ENCODE measurements at regions of chr4 and their contacts with region 1.

Region 1: GRCh38 chr4:56387023-56388001 is at the start of gene AASDH:
- DNase-seq: peak; percentile 92
- H3K4me3 ChIP-seq: peak within 1 kb of the TSS; percentile 84 to 91 (median 91)
- H3K27ac ChIP-seq: peak within 1 kb of the TSS; percentile 96
- H3K4me1 ChIP-seq: peaks cover 13% of the 10 kb centered on the region
- H3K27me3 ChIP-seq: no peaks in the 10 kb centered on the region
- CTCF ChIP-seq: no peak
- total RNA-seq, gene AASDH: 11.4 to 18.2 TPM

Region 2: DNA sequence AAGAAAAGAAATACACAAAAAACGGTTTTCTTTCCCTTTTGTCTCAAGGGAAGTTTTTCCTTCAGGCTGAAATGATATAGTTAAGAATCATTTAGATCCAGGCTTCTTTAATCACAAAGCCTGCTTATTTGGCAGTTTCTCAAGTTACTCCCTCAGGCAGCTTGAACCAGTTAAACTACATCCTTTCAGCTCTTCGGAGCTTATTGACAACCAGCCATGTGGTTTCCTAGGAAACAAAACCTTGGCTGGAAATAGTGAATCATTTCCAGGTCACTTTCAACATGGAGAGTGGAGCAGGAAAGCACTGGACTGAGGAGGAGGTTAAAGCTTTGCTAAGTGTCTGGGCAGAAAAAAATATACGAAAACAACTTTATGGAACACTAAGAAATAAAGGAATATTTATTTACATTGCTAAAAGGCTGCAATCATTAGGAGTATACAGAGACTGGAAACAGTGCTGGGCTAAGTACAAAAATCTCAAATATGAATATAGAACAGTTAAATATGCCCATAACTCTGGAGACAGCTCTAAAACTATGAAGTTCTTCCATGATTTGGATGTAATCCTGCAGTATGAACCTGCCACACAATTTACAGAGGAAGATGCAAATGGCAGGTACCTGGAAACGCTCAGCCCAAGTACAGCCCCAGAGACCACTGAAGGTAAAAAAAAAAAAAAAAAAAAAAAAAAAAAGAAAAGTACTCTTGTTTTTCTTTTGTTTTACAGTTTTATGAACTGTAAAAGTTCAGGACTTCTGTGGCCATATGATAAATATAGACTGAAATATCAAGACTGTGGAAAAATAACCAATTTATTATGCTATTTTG is 23.1 kb after region 1 on chr4:
- CTCF ChIA-PET with region 1: no interaction called
- dilution Hi-C with region 1: no loop called
- in situ Hi-C with region 1: no loop called
- intact Hi-C with region 1: loop called (anchors 1 kb)
- DNase-seq: peak; percentile 96
- H3K4me3 ChIP-seq: peak overlapping the region; percentile 22 to 32 (median 32)
- H3K27ac ChIP-seq: peak overlapping the region; percentile 96
- H3K4me1 ChIP-seq: peaks cover 13% of the 10 kb centered on the region
- H3K27me3 ChIP-seq: no peaks in the 10 kb centered on the region
- CTCF ChIP-seq: no peak

Region 3: GRCh38 chr4:56435306-56435926 is 48.1 kb after region 1 on chr4 and contains the start of gene PPAT:
- CTCF ChIA-PET with region 1: no interaction called
- dilution Hi-C with region 1: no loop called
- in situ Hi-C with region 1: no loop called
- intact Hi-C with region 1: loop called (anchors 1 kb)
- DNase-seq: peak; percentile 99
- H3K4me3 ChIP-seq: peak within 1 kb of the TSS; percentile 85 to 89 (median 88)
- H3K27ac ChIP-seq: peak within 1 kb of the TSS; percentile 95
- H3K4me1 ChIP-seq: peaks cover 9% of the 10 kb centered on the region
- H3K27me3 ChIP-seq: no peaks in the 10 kb centered on the region
- CTCF ChIP-seq: no peak
- total RNA-seq, gene PPAT: 20.0 to 28.4 TPM

Region 4: GRCh38 chr4:56460085-56460484 is 72.8 kb after region 1 on chr4:
- CTCF ChIA-PET with region 1: no interaction called
- dilution Hi-C with region 1: loop called (anchors 5 kb)
- in situ Hi-C with region 1: no loop called
- intact Hi-C with region 1: no loop called
- DNase-seq: peak; percentile 24
- H3K4me3 ChIP-seq: no peak overlapping the region
- H3K27ac ChIP-seq: peak overlapping the region; percentile 2
- H3K4me1 ChIP-seq: peaks cover 7% of the 10 kb centered on the region
- H3K27me3 ChIP-seq: no peaks in the 10 kb centered on the region
- CTCF ChIP-seq: no peak

Region 5: GRCh38 chr4:56467284-56468096 is 80.2 kb after region 1 on chr4 and contains the start of gene SRP72:
- CTCF ChIA-PET with region 1: no interaction called
- dilution Hi-C with region 1: loop called (anchors 5 kb)
- in situ Hi-C with region 1: no loop called
- intact Hi-C with region 1: loop called (anchors 2 kb)
- DNase-seq: peak; percentile 86
- H3K4me3 ChIP-seq: peak within 1 kb of the TSS; percentile 74 to 100 (median 99)
- H3K27ac ChIP-seq: peak within 1 kb of the TSS; percentile 99
- H3K4me1 ChIP-seq: peaks cover 10% of the 10 kb centered on the region
- H3K27me3 ChIP-seq: no peaks in the 10 kb centered on the region
- CTCF ChIP-seq: no peak
- total RNA-seq, gene SRP72: 91.2 to 190 TPM